Activated B cell treated with CpG ODN at 0.5 μM for 24 hours (primary cell): ENCODE measurements at regions of chr15 and their contacts with region 1.

Region 1: DNA sequence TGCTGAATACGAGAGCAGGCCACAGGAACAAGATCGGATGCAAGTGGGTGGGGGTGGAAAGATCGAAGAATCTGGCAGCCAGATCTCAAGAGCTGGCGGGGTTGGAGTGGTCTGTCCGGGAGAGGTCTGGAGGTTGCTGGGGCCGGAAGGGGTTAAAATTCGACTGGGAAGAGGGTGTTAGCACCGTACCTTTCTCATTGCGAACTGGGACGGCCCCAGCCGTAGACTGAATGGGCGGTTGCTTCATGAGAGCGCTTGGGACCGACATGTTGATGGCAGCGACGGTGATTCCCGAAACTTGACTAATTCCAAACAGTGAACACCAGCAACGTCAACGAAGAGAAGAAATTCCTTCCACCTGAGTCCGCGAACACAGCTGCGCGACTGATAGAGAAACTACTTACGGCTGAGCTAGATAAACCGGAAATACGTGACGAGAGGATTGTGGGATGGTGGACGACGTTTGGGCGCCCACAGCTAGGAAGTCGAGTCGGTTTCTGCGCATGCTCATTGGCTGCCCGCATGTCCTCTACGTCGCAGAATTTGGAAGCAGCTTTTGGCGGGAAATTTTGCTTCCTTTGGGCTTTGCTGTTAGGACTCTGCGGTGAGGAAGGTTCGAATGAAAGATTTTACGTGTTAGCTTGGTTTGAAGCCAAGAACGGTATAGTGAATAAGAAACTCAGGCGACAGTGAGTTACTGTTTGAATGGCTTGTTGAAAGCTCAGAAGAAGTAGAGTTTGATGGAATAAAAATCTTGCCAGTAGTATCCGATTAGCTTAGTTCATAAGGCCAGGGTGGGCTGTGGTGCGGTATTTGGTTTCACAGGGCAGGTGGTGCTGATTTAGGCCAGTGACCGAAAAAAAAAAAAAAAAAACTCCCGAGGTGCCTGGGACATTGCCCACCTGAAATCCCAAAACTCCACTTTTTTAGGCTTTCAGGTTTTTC is at the start of gene MFAP1:
- DNase-seq: peak; percentile 72
- ATAC-seq: peak; percentile 86
- H3K4me3 Mint-ChIP-seq: peak within 1 kb of the TSS; percentile 99
- H3K27ac Mint-ChIP-seq: peak within 1 kb of the TSS; percentile 99
- H3K4me1 Mint-ChIP-seq: peaks cover 62% of the 10 kb centered on the region
- H3K27me3 Mint-ChIP-seq: no peaks in the 10 kb centered on the region
- CTCF ChIP-seq: no peak
- total RNA-seq, gene MFAP1: 26.1 and 27.9 TPM in 2 replicates

Region 2: GRCh38 chr15:43791993-43792760 is 32.4 kb before region 1 on chr15 and contains the start of gene SERF2:
- CTCF ChIA-PET with region 1: no interaction called
- POLR2A ChIA-PET with region 1: interaction called, 14 read pairs
- intact Hi-C with region 1: loop called (anchors 1 kb)
- DNase-seq: peak; percentile 96
- ATAC-seq: peak; percentile 88
- H3K4me3 Mint-ChIP-seq: peak within 1 kb of the TSS; percentile 98
- H3K27ac Mint-ChIP-seq: peak within 1 kb of the TSS; percentile 97
- H3K4me1 Mint-ChIP-seq: peaks cover 79% of the 10 kb centered on the region
- H3K27me3 Mint-ChIP-seq: no peaks in the 10 kb centered on the region
- CTCF ChIP-seq: no peak
- total RNA-seq, gene SERF2: 601 and 656 TPM in 2 replicates

Region 3: DNA sequence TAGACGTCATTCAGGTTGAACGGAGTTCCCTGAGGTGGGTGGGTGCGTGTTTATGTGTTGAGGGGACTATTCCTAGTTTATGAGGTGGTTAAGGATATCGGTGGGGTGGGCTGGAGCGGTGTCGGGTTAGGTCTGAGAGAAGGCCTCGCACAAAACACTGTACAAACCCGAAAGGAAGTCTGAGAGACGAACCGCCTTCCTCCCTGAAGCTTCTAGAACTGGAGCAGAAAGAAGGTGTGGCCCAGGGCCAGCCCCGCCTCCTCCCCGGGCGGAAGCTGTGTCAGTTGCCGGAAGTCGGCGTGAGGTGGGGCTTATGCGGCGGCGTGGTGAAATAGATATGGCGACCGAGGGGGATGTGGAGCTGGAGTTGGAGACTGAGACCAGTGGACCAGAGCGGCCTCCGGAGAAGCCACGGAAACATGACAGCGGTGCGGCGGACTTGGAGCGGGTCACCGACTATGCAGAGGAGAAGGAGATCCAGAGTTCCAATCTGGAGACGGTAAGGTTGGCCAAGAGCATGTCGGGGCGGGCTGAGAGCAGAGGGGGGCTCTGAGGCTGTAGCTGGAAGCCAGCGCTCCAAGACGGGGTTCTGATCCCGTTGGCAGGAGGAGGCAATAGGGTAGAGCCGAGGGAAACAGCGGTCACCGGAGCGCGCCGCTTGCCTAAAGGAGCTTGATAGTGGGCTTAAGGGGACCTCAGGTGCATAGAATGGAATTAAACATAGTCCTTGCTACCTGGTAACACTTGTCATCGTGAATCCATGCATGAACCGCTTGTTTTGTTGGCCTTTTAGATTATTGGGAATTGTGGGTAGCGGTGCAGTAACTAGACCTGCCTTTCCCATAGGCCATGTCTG is 24.1 kb before region 1 on chr15 and contains the start of gene HYPK:
- CTCF ChIA-PET with region 1: interaction called, 5 read pairs
- POLR2A ChIA-PET with region 1: interaction called, 18 read pairs
- intact Hi-C with region 1: loop called (anchors 2 kb)
- DNase-seq: peak; percentile 83
- ATAC-seq: peak; percentile 98
- H3K4me3 Mint-ChIP-seq: peak within 1 kb of the TSS; percentile 98
- H3K27ac Mint-ChIP-seq: peak within 1 kb of the TSS; percentile 96
- H3K4me1 Mint-ChIP-seq: peaks cover 51% of the 10 kb centered on the region
- H3K27me3 Mint-ChIP-seq: no peaks in the 10 kb centered on the region
- CTCF ChIP-seq: no peak
- total RNA-seq, gene HYPK: 19.2 and 19.7 TPM in 2 replicates

Region 4: DNA sequence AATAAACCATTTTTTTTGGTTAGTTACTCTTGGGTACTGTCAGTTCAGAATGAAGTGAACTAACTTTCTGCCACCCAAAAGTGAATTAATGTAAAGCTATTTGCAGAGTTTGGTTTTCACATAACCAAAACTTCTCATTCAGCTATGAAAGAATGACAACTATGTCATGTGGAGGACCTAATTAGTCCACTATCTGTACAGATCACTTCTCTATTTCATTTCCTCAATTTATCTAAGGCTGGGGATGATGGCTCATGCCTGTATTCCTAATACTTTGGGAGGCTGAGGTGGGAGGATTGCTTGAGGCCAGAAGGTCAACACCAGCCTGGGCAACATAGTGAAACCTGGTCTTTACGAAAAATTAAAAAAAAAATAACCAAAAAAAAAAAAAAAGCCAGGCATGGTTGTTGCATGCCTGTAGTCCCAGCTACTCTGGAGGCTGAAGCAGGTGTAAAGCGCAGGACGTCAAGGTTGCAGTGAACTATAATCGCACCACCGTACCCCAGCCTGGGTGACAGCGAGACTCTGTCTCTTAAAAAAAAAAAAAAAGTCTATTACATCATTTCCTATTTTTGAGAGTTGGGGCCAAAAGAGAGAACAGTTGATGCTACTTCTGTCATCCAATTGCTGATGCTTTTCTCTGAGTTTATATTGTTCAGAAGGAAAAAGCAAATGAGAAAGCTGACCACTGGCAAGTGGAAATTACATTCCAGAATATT is 15.5 kb before region 1 on chr15:
- CTCF ChIA-PET with region 1: interaction called, 4 read pairs
- POLR2A ChIA-PET with region 1: interaction called, 52 read pairs
- intact Hi-C with region 1: loop called (anchors 1 kb)
- DNase-seq: no peak
- ATAC-seq: peak; percentile 90
- H3K4me3 Mint-ChIP-seq: peak overlapping the region; percentile 62
- H3K27ac Mint-ChIP-seq: peak overlapping the region; percentile 85
- H3K4me1 Mint-ChIP-seq: peaks cover 28% of the 10 kb centered on the region
- H3K27me3 Mint-ChIP-seq: no peaks in the 10 kb centered on the region
- CTCF ChIP-seq: no peak

Region 5: GRCh38 chr15:44033894-44034293 is 209.3 kb after region 1 on chr15:
- CTCF ChIA-PET with region 1: no interaction called
- POLR2A ChIA-PET with region 1: no interaction called
- intact Hi-C with region 1: no loop called
- DNase-seq: no peak
- ATAC-seq: no peak
- H3K4me3 Mint-ChIP-seq: no peak overlapping the region
- H3K27ac Mint-ChIP-seq: no peak overlapping the region
- H3K4me1 Mint-ChIP-seq: no peaks in the 10 kb centered on the region
- H3K27me3 Mint-ChIP-seq: peaks cover 24% of the 10 kb centered on the region
- CTCF ChIP-seq: no peak